ENCODE measurements at regions of chr15 and their contacts with region 1.

Region 1: GRCh38 chr15:64950888-64951287 is 38.8 kb downstream of the SPG21 start:
- DNase-seq: no peak
- ATAC-seq: no peak
- H3K4me3 ChIP-seq: no peak overlapping the region
- H3K27ac ChIP-seq: no peak overlapping the region
- H3K4me1 ChIP-seq: no peaks in the 10 kb centered on the region
- H3K27me3 ChIP-seq: no peaks in the 10 kb centered on the region
- CTCF ChIP-seq: no peak

Region 2: DNA sequence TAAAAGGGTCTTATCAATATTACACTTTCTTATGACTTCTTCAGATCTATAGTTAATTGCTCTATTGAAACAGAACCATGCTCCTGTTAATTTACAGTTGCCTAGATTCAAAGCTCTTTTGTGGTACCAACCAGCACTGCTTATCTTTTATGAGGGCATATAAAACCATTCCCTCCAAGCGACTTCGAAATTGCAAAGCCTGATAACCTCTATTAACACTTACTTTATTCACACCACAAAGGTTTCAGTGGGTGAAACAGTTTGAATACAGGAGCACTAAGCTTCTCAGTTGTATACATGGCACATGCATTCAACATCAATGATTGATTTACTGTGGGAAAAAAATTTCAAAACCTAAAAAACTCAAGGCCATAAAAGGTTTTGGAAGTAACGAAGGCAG is 713.2 kb before region 1 on chr15:
- intact Hi-C with region 1: loop called in 1 of 2 experiments (anchors 2 kb)
- DNase-seq: no peak
- ATAC-seq: no peak
- H3K4me3 ChIP-seq: no peak overlapping the region
- H3K27ac ChIP-seq: no peak overlapping the region
- H3K4me1 ChIP-seq: no peaks in the 10 kb centered on the region
- H3K27me3 ChIP-seq: no peaks in the 10 kb centered on the region
- CTCF ChIP-seq: no peak

Region 3: DNA sequence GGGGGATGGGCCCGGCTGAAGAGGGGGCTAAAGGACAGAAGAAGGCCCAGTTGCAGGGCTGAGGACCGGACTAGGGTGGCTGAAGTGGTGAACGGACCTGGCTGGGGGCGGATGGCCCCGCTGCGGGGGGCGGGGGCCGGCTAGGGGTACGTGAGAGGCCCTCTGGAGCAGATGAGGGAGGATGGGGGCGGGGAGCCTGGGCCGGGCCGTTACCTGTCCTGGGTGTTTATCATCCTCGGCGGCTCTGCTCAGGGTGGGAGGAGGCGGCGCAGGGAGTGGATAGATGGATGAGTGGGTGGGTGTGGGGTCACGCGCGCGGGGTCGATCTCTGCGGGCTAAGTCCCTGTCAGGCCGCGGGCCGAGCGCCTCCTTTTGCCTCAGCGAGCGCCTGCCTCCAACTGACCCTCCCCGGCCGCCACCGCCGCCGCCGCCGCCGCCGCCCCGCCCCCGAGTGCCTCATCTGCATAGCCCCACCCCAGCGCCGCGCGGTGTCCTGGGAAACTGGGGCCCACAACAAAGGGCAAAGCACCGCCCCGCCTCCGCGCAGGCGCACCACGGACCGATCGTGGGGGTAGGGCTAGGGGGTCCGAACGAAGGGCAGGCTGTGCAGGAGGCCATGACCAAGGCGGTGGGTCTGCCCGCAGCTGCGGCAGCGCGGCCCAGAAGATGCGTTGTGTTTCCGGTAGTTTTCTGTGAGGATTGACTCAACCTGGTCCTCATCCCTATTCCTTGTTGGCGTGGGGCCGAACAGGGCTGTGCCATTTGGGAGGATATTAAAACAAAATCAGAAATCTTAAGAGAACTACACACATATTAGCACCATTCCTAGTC is 247.9 kb before region 1 on chr15:
- intact Hi-C with region 1: no loop called
- DNase-seq: peak; percentile 98 to 99
- ATAC-seq: peak; percentile 94 to 96 (median 96)
- H3K4me3 ChIP-seq: peak overlapping the region; percentile 85
- H3K27ac ChIP-seq: peak overlapping the region; percentile 87
- H3K4me1 ChIP-seq: peaks cover 43% of the 10 kb centered on the region
- H3K27me3 ChIP-seq: no peaks in the 10 kb centered on the region
- CTCF ChIP-seq: no peak

Region 4: DNA sequence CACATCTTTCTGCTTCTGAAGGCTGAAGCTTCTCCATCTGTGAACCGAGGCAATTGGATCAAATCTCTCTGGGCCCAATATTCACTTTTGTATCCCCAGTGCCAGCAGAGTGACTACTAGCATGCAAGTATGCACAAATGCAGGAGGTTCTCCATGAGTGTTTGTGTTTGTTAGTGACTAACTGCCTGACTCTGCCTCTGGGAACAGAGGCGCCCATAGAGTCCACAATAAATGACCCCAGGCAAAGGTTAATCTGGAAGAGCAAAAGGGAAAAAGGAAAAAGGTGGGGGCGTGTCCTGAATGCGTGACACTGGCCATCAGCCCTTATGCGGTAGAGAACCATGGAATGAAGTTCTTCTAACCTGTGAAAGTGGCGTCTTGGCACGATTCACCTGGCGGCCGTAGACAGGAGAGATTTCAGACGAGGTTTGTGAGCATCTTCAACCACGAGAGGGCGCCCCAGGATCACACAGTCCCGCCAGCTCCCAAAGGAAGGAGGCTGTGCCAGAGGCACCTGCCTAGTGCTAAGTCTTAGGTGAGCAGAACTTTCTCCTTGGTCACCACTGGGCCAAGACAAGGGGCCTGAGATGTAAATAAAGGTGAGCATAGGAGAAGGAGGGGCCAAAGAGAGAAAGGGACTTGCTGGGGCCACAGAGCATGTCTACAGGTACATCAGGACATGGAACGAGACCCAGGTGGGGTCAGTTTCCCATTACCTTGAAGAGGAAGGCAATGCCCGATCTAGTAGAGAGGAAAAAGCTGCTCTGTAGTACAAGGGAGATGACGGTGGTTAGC is 219.7 kb before region 1 on chr15:
- intact Hi-C with region 1: no loop called
- DNase-seq: peak; percentile 85 to 92
- ATAC-seq: peak; percentile 80 to 91 (median 90)
- H3K4me3 ChIP-seq: peak overlapping the region; percentile 9
- H3K27ac ChIP-seq: no peak overlapping the region
- H3K4me1 ChIP-seq: no peaks in the 10 kb centered on the region
- H3K27me3 ChIP-seq: no peaks in the 10 kb centered on the region
- CTCF ChIP-seq: peak; percentile 93

Region 5: GRCh38 chr15:65264863-65265430 is 314.1 kb after region 1 on chr15:
- intact Hi-C with region 1: loop called in 1 of 2 experiments (anchors 5 kb)
- DNase-seq: no peak
- ATAC-seq: no peak
- H3K4me3 ChIP-seq: no peak overlapping the region
- H3K27ac ChIP-seq: no peak overlapping the region
- H3K4me1 ChIP-seq: no peaks in the 10 kb centered on the region
- H3K27me3 ChIP-seq: no peaks in the 10 kb centered on the region
- CTCF ChIP-seq: no peak

Measured in psoas muscle (tissue), 8 donors.